Dendritic cell treated with granulocyte-macrophage colony-stimulating factor and Interleukin-4, amounts not matched to agents 40 ng/mL and 50 ng/mL, for 4 days (primary cell): ENCODE measurements at regions of chr17 and their contacts with region 1.

Region 1: GRCh38 chr17:385926-386876 is 33.6 kb upstream of the RPH3AL start:
- H3K4me3 Mint-ChIP-seq: peak overlapping the region; percentile 62
- H3K27ac Mint-ChIP-seq: no peak overlapping the region
- H3K4me1 Mint-ChIP-seq: peaks cover 23% of the 10 kb centered on the region
- H3K27me3 Mint-ChIP-seq: peaks cover 68% of the 10 kb centered on the region

Region 2: GRCh38 chr17:164303-165235 is 221.6 kb before region 1 on chr17:
- intact Hi-C with region 1: loop called (anchors 5 kb)
- H3K4me3 Mint-ChIP-seq: no peak overlapping the region
- H3K27ac Mint-ChIP-seq: no peak overlapping the region
- H3K4me1 Mint-ChIP-seq: no peaks in the 10 kb centered on the region
- H3K27me3 Mint-ChIP-seq: no peaks in the 10 kb centered on the region

Region 3: GRCh38 chr17:404703-405102 is 18.5 kb after region 1 on chr17:
- intact Hi-C with region 1: no loop called
- H3K4me3 Mint-ChIP-seq: no peak overlapping the region
- H3K27ac Mint-ChIP-seq: no peak overlapping the region
- H3K4me1 Mint-ChIP-seq: peaks cover 8% of the 10 kb centered on the region
- H3K27me3 Mint-ChIP-seq: no peaks in the 10 kb centered on the region